ENCODE measurements at regions of chr1 and their contacts with region 1.

Region 1: GRCh38 chr1:48236716-48237470 is 14.4 kb downstream of the SLC5A9 start:
- DNase-seq: peak in 3 of 14 experiments; percentile 44 to 63 (median 56)
- ATAC-seq: peak; percentile 56
- H3K4me3 ChIP-seq: no peak overlapping the region
- H3K4me3 Mint-ChIP-seq: no peak overlapping the region
- H3K27ac ChIP-seq: no peak overlapping the region
- H3K27ac Mint-ChIP-seq: no peak overlapping the region
- H3K4me1 ChIP-seq: no peaks in the 10 kb centered on the region
- H3K4me1 Mint-ChIP-seq: no peaks in the 10 kb centered on the region
- H3K27me3 ChIP-seq: peaks cover 0 to 2% of the 10 kb centered on the region in 2 experiments
- H3K27me3 Mint-ChIP-seq: no peaks in the 10 kb centered on the region
- CTCF ChIP-seq: peak; percentile 80

Region 2: GRCh38 chr1:47997289-47998200 is 239.3 kb before region 1 on chr1 and contains the start of gene TRABD2B:
- CTCF ChIA-PET with region 1: interaction called, 4 read pairs
- POLR2A ChIA-PET with region 1: no interaction called
- intact Hi-C with region 1: loop called (anchors 1 to 5 kb)
- DNase-seq: peak; percentile 11 to 74 (median 48)
- ATAC-seq: peak; percentile 51
- H3K4me3 ChIP-seq: peak within 1 kb of the TSS; percentile 34
- H3K4me3 Mint-ChIP-seq: peak within 1 kb of the TSS; percentile 77
- H3K27ac ChIP-seq: no peak within 1 kb of the TSS
- H3K27ac Mint-ChIP-seq: no peak within 1 kb of the TSS
- H3K4me1 ChIP-seq: peaks cover 7% of the 10 kb centered on the region
- H3K4me1 Mint-ChIP-seq: peaks cover 15% of the 10 kb centered on the region
- H3K27me3 ChIP-seq: peaks cover 38 to 52% of the 10 kb centered on the region in 2 experiments
- H3K27me3 Mint-ChIP-seq: peaks cover 77% of the 10 kb centered on the region
- CTCF ChIP-seq: peak; percentile 91
- total RNA-seq, gene TRABD2B: not detected

Region 3: GRCh38 chr1:48093696-48094528 is 143.0 kb before region 1 on chr1:
- CTCF ChIA-PET with region 1: interaction called, 10 read pairs
- POLR2A ChIA-PET with region 1: no interaction called
- intact Hi-C with region 1: loop called (anchors 1 kb)
- DNase-seq: peak; percentile 51 to 80 (median 65)
- ATAC-seq: peak; percentile 80
- H3K4me3 ChIP-seq: no peak overlapping the region
- H3K4me3 Mint-ChIP-seq: peak overlapping the region; percentile 82
- H3K27ac ChIP-seq: no peak overlapping the region
- H3K27ac Mint-ChIP-seq: no peak overlapping the region
- H3K4me1 ChIP-seq: peaks cover 7% of the 10 kb centered on the region
- H3K4me1 Mint-ChIP-seq: peaks cover 6% of the 10 kb centered on the region
- H3K27me3 ChIP-seq: peaks cover 14 to 35% of the 10 kb centered on the region in 2 experiments
- H3K27me3 Mint-ChIP-seq: peaks cover 75% of the 10 kb centered on the region
- CTCF ChIP-seq: peak; percentile 83

Region 4: GRCh38 chr1:48263041-48263440 is 26.1 kb after region 1 on chr1:
- CTCF ChIA-PET with region 1: no interaction called
- POLR2A ChIA-PET with region 1: no interaction called
- intact Hi-C with region 1: no loop called
- DNase-seq: no peak
- ATAC-seq: no peak
- H3K4me3 ChIP-seq: no peak overlapping the region
- H3K4me3 Mint-ChIP-seq: no peak overlapping the region
- H3K27ac ChIP-seq: no peak overlapping the region
- H3K27ac Mint-ChIP-seq: no peak overlapping the region
- H3K4me1 ChIP-seq: no peaks in the 10 kb centered on the region
- H3K4me1 Mint-ChIP-seq: no peaks in the 10 kb centered on the region
- H3K27me3 ChIP-seq: no peaks in the 10 kb centered on the region
- H3K27me3 Mint-ChIP-seq: peaks cover 12% of the 10 kb centered on the region
- CTCF ChIP-seq: no peak

Region 5: GRCh38 chr1:48498096-48498791 is 261.4 kb after region 1 on chr1:
- CTCF ChIA-PET with region 1: no interaction called
- POLR2A ChIA-PET with region 1: no interaction called
- intact Hi-C with region 1: no loop called
- DNase-seq: peak; percentile 35 to 82 (median 61)
- ATAC-seq: peak; percentile 84
- H3K4me3 ChIP-seq: no peak overlapping the region
- H3K4me3 Mint-ChIP-seq: peak overlapping the region; percentile 22
- H3K27ac ChIP-seq: no peak overlapping the region
- H3K27ac Mint-ChIP-seq: no peak overlapping the region
- H3K4me1 ChIP-seq: peaks cover 5% of the 10 kb centered on the region
- H3K4me1 Mint-ChIP-seq: peaks cover 6% of the 10 kb centered on the region
- H3K27me3 ChIP-seq: peaks cover 0 to 7% of the 10 kb centered on the region in 2 experiments
- H3K27me3 Mint-ChIP-seq: no peaks in the 10 kb centered on the region
- CTCF ChIP-seq: peak; percentile 95